CD8-positive, alpha-beta T cell (primary cell): ENCODE measurements at regions of chr14 and their contacts with region 1.

Region 1: DNA sequence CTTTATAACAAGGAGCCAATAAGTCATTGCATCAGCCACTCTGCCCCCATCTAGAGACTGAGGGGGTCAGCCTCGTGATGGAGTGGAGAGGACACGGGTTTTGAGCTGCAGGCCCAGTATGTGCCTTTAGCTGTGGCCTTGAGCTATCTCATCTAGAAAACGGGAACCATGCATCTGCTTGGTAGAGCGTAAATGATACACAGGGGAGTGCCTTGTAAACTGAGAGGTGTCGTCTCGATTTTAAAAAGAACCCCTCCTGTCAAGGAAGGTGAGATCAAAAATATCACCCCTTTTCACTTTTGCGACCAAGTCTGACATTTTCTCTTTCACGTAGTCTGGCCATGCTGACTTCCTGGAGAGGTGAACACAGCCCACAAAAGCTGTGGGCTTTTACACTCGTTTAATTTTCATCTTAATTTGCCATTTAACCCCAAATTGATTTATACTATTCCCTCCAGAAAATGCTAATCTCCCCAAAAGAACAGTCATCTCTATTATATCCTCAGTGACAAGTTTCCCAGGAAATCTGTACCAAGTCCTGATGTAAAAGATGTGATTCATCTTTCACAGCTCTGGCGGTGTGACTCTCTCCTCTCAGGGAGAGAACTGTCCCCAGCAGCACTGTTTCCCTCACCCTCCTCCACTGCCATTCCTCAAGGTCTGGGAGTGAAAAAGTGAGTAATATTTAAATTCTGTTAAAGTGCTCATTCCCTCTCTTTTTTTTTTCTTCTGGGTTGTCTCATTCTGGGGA is 30.6 kb downstream of the VCPKMT start:
- DNase-seq: peak in 3 of 9 experiments; percentile 28 to 81 (median 65)
- ATAC-seq: peak; percentile 2
- H3K4me3 ChIP-seq: peak overlapping the region in 1 of 2 experiments; percentile 16
- H3K4me3 Mint-ChIP-seq: peak overlapping the region; percentile 66
- H3K27ac ChIP-seq: peak overlapping the region; percentile 50 to 98
- H3K27ac Mint-ChIP-seq: peak overlapping the region; percentile 92
- H3K4me1 ChIP-seq: peaks cover 86% of the 10 kb centered on the region
- H3K4me1 Mint-ChIP-seq: peaks cover 94% of the 10 kb centered on the region
- H3K27me3 ChIP-seq: no peaks in the 10 kb centered on the region
- H3K27me3 Mint-ChIP-seq: no peaks in the 10 kb centered on the region
- CTCF ChIP-seq: no peak

Region 2: DNA sequence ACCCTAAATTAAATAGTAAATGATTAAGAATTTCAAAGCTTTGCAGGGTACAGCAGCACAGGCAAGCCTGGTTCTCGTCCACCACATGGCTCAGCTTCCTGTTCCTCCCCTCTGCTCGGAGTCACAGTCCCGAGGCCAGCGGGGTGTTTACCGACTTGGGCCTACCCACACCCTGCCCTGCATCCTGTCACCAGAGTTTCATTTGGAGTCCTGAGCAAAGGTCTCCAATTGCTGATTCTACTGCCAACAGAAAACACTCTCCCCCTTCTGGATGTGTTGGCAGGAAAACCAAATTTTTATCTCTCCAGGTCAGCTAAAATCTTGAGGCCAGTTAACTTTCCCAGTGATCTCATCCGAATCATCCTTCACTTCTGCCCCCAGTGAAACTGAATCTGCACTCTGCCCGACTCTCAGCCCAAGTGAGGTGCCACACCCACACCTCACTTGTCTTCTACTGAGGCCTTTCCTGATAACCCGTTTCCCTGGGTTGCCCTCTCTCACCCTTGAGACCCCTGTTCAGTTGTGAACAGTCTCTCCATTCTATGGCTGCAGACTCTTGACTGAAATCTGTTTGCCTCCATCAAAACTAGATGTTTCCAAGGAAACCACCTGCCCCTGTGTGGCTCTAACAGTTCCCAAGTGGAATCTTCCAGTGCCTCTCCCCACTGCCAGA is 40.6 kb before region 1 on chr14:
- CTCF ChIA-PET with region 1: interaction called, 5 read pairs
- POLR2A ChIA-PET with region 1: interaction called, 8 read pairs
- intact Hi-C with region 1: loop called in 1 of 2 experiments (anchors 2 kb)
- DNase-seq: peak; percentile 27 to 86 (median 72)
- ATAC-seq: peak; percentile 77
- H3K4me3 ChIP-seq: peak overlapping the region in 1 of 2 experiments; percentile 17
- H3K4me3 Mint-ChIP-seq: peak overlapping the region; percentile 56
- H3K27ac ChIP-seq: peak overlapping the region; percentile 63 to 89
- H3K27ac Mint-ChIP-seq: peak overlapping the region; percentile 91
- H3K4me1 ChIP-seq: peaks cover 62% of the 10 kb centered on the region
- H3K4me1 Mint-ChIP-seq: peaks cover 65% of the 10 kb centered on the region
- H3K27me3 ChIP-seq: no peaks in the 10 kb centered on the region
- H3K27me3 Mint-ChIP-seq: no peaks in the 10 kb centered on the region
- CTCF ChIP-seq: no peak

Region 3: GRCh38 chr14:50067723-50068495 is 17.8 kb before region 1 on chr14:
- CTCF ChIA-PET with region 1: interaction called, 20 read pairs
- POLR2A ChIA-PET with region 1: interaction called, 60 read pairs
- intact Hi-C with region 1: loop called in 1 of 2 experiments (anchors 1 kb)
- DNase-seq: peak in 1 of 9 experiments; percentile 31
- ATAC-seq: no peak
- H3K4me3 ChIP-seq: no peak overlapping the region
- H3K4me3 Mint-ChIP-seq: no peak overlapping the region
- H3K27ac ChIP-seq: no peak overlapping the region
- H3K27ac Mint-ChIP-seq: no peak overlapping the region
- H3K4me1 ChIP-seq: peaks cover 41% of the 10 kb centered on the region
- H3K4me1 Mint-ChIP-seq: peaks cover 53% of the 10 kb centered on the region
- H3K27me3 ChIP-seq: no peaks in the 10 kb centered on the region
- H3K27me3 Mint-ChIP-seq: no peaks in the 10 kb centered on the region
- CTCF ChIP-seq: no peak

Region 4: DNA sequence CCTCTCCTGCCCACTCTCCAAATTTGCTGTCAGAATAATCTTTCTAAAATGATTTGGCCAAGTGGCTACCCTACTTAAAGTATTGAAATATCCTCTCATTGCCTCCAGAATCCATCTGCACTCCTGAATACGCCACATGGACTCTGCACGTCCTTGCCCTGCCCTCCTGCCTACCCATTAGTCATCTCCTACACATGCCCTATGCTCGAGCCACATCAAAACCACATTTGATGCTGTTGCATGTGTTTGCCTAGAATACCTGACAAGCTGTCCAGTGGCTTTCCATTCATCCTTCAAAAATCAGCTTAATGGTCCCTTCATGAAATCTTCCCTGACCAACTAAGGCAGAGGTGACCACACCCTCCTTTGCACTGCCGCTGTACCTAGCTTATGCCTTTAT is 13.6 kb after region 1 on chr14:
- CTCF ChIA-PET with region 1: interaction called, 21 read pairs
- POLR2A ChIA-PET with region 1: interaction called, 13 read pairs
- intact Hi-C with region 1: loop called (anchors 1 to 2 kb)
- DNase-seq: no peak
- ATAC-seq: no peak
- H3K4me3 ChIP-seq: no peak overlapping the region
- H3K4me3 Mint-ChIP-seq: no peak overlapping the region
- H3K27ac ChIP-seq: no peak overlapping the region
- H3K27ac Mint-ChIP-seq: peak overlapping the region; percentile 69
- H3K4me1 ChIP-seq: peaks cover 73% of the 10 kb centered on the region
- H3K4me1 Mint-ChIP-seq: peaks cover 71% of the 10 kb centered on the region
- H3K27me3 ChIP-seq: no peaks in the 10 kb centered on the region
- H3K27me3 Mint-ChIP-seq: no peaks in the 10 kb centered on the region
- CTCF ChIP-seq: no peak

Region 5: GRCh38 chr14:50109342-50109741 is 23.6 kb after region 1 on chr14:
- CTCF ChIA-PET with region 1: interaction called, 21 read pairs
- POLR2A ChIA-PET with region 1: interaction called, 8 read pairs
- intact Hi-C with region 1: loop called in 1 of 2 experiments (anchors 1 kb)
- DNase-seq: no peak
- ATAC-seq: no peak
- H3K4me3 ChIP-seq: no peak overlapping the region
- H3K4me3 Mint-ChIP-seq: no peak overlapping the region
- H3K27ac ChIP-seq: no peak overlapping the region
- H3K27ac Mint-ChIP-seq: no peak overlapping the region
- H3K4me1 ChIP-seq: peaks cover 1% of the 10 kb centered on the region
- H3K4me1 Mint-ChIP-seq: peaks cover 20% of the 10 kb centered on the region
- H3K27me3 ChIP-seq: no peaks in the 10 kb centered on the region
- H3K27me3 Mint-ChIP-seq: no peaks in the 10 kb centered on the region
- CTCF ChIP-seq: no peak

Region 6: DNA sequence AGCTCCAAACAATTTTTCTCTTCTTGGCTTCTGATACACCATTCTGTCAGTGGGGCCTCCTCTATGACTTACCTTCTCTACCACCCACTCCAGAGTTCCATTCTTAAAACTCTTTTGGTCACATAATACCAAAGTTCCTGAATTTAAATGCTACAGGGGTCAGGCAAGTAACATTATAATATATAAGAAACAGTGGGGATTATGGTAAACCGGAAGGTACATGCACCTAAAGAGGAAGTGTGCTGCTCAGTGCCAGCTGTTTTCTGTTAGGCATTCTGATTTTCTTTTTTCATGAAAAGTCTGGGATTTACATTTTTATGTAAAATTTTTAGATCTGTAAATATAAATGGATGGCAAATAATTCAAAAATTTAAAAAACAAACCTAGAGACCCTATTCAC is 105.8 kb after region 1 on chr14:
- CTCF ChIA-PET with region 1: no interaction called
- POLR2A ChIA-PET with region 1: no interaction called
- intact Hi-C with region 1: no loop called
- DNase-seq: no peak
- ATAC-seq: no peak
- H3K4me3 ChIP-seq: no peak overlapping the region
- H3K4me3 Mint-ChIP-seq: no peak overlapping the region
- H3K27ac ChIP-seq: no peak overlapping the region
- H3K27ac Mint-ChIP-seq: no peak overlapping the region
- H3K4me1 ChIP-seq: no peaks in the 10 kb centered on the region
- H3K4me1 Mint-ChIP-seq: no peaks in the 10 kb centered on the region
- H3K27me3 ChIP-seq: no peaks in the 10 kb centered on the region
- H3K27me3 Mint-ChIP-seq: no peaks in the 10 kb centered on the region
- CTCF ChIP-seq: no peak